ENCODE measurements at regions of chr2 and their contacts with region 1.

Region 1: GRCh38 chr2:45578056-45578809 is 32.8 kb downstream of the SRBD1 start:
- DNase-seq: peak; percentile 75 to 80 (median 78)
- H3K4me3 ChIP-seq: no peak overlapping the region
- H3K27ac ChIP-seq: no peak overlapping the region
- H3K4me1 ChIP-seq: peaks cover 0 to 8% (median 5%) of the 10 kb centered on the region in 4 experiments
- H3K27me3 ChIP-seq: no peaks in the 10 kb centered on the region

Region 2: GRCh38 chr2:44981136-44982108 is 596.8 kb before region 1 on chr2:
- CTCF ChIA-PET with region 1: interaction called, 79 read pairs
- POLR2A ChIA-PET with region 1: no interaction called
- DNase-seq: peak; percentile 63 to 84 (median 76)
- H3K4me3 ChIP-seq: no peak overlapping the region
- H3K27ac ChIP-seq: no peak overlapping the region
- H3K4me1 ChIP-seq: no peaks in the 10 kb centered on the region
- H3K27me3 ChIP-seq: peaks cover 0 to 2% (median 0%) of the 10 kb centered on the region in 5 experiments

Region 3: GRCh38 chr2:45494269-45494977 is 83.8 kb before region 1 on chr2:
- CTCF ChIA-PET with region 1: interaction called, 11 read pairs
- POLR2A ChIA-PET with region 1: no interaction called
- DNase-seq: peak; percentile 72 to 85 (median 85)
- H3K4me3 ChIP-seq: no peak overlapping the region
- H3K27ac ChIP-seq: no peak overlapping the region
- H3K4me1 ChIP-seq: peaks cover 2 to 15% (median 8%) of the 10 kb centered on the region in 4 experiments
- H3K27me3 ChIP-seq: no peaks in the 10 kb centered on the region

Region 4: GRCh38 chr2:45567974-45568789 is 10.1 kb before region 1 on chr2:
- CTCF ChIA-PET with region 1: interaction called, 32 read pairs
- POLR2A ChIA-PET with region 1: interaction called, 5 read pairs
- DNase-seq: peak; percentile 95 to 97 (median 95)
- H3K4me3 ChIP-seq: peak overlapping the region in 6 of 7 experiments; percentile 48 to 86 (median 75)
- H3K27ac ChIP-seq: peak overlapping the region; percentile 94
- H3K4me1 ChIP-seq: peaks cover 8 to 50% (median 28%) of the 10 kb centered on the region in 4 experiments
- H3K27me3 ChIP-seq: no peaks in the 10 kb centered on the region

Region 5: GRCh38 chr2:45821564-45822271 is 243.5 kb after region 1 on chr2:
- CTCF ChIA-PET with region 1: no interaction called
- POLR2A ChIA-PET with region 1: no interaction called
- DNase-seq: no peak
- H3K4me3 ChIP-seq: no peak overlapping the region
- H3K27ac ChIP-seq: no peak overlapping the region
- H3K4me1 ChIP-seq: peaks cover 2 to 25% (median 8%) of the 10 kb centered on the region in 4 experiments
- H3K27me3 ChIP-seq: no peaks in the 10 kb centered on the region

Measured in common myeloid progenitor, CD34-positive (primary cell).